Activated B cell treated with CpG ODN at 0.5 μM for 24 hours (primary cell): ENCODE measurements at regions of chr4 and their contacts with region 1.

Region 1: GRCh38 chr4:43132010-43132582 is 239.6 kb downstream of the GRXCR1 start:
- DNase-seq: no peak
- ATAC-seq: no peak
- H3K4me3 Mint-ChIP-seq: no peak overlapping the region
- H3K27ac Mint-ChIP-seq: no peak overlapping the region
- H3K4me1 Mint-ChIP-seq: peaks cover 1% of the 10 kb centered on the region
- H3K27me3 Mint-ChIP-seq: no peaks in the 10 kb centered on the region
- CTCF ChIP-seq: peak; percentile 70

Region 2: GRCh38 chr4:44425614-44426208 is 1293.6 kb after region 1 on chr4:
- CTCF ChIA-PET with region 1: no interaction called
- POLR2A ChIA-PET with region 1: no interaction called
- intact Hi-C with region 1: loop called (anchors 5 kb)
- DNase-seq: no peak
- ATAC-seq: no peak
- H3K4me3 Mint-ChIP-seq: no peak overlapping the region
- H3K27ac Mint-ChIP-seq: no peak overlapping the region
- H3K4me1 Mint-ChIP-seq: no peaks in the 10 kb centered on the region
- H3K27me3 Mint-ChIP-seq: no peaks in the 10 kb centered on the region
- CTCF ChIP-seq: no peak

Region 3: GRCh38 chr4:44493924-44494323 is 1361.8 kb after region 1 on chr4:
- CTCF ChIA-PET with region 1: interaction called, 5 read pairs
- POLR2A ChIA-PET with region 1: no interaction called
- intact Hi-C with region 1: loop called (anchors 2 kb)
- DNase-seq: no peak
- ATAC-seq: no peak
- H3K4me3 Mint-ChIP-seq: no peak overlapping the region
- H3K27ac Mint-ChIP-seq: no peak overlapping the region
- H3K4me1 Mint-ChIP-seq: no peaks in the 10 kb centered on the region
- H3K27me3 Mint-ChIP-seq: no peaks in the 10 kb centered on the region
- CTCF ChIP-seq: no peak

Region 4: GRCh38 chr4:44629280-44629866 is 1497.3 kb after region 1 on chr4:
- CTCF ChIA-PET with region 1: interaction called, 6 read pairs
- POLR2A ChIA-PET with region 1: no interaction called
- intact Hi-C with region 1: loop called (anchors 1 kb)
- DNase-seq: no peak
- ATAC-seq: peak; percentile 77
- H3K4me3 Mint-ChIP-seq: no peak overlapping the region
- H3K27ac Mint-ChIP-seq: no peak overlapping the region
- H3K4me1 Mint-ChIP-seq: no peaks in the 10 kb centered on the region
- H3K27me3 Mint-ChIP-seq: peaks cover 2% of the 10 kb centered on the region
- CTCF ChIP-seq: no peak